ENCODE measurements at regions of chr12 and their contacts with region 1.

Region 1: DNA sequence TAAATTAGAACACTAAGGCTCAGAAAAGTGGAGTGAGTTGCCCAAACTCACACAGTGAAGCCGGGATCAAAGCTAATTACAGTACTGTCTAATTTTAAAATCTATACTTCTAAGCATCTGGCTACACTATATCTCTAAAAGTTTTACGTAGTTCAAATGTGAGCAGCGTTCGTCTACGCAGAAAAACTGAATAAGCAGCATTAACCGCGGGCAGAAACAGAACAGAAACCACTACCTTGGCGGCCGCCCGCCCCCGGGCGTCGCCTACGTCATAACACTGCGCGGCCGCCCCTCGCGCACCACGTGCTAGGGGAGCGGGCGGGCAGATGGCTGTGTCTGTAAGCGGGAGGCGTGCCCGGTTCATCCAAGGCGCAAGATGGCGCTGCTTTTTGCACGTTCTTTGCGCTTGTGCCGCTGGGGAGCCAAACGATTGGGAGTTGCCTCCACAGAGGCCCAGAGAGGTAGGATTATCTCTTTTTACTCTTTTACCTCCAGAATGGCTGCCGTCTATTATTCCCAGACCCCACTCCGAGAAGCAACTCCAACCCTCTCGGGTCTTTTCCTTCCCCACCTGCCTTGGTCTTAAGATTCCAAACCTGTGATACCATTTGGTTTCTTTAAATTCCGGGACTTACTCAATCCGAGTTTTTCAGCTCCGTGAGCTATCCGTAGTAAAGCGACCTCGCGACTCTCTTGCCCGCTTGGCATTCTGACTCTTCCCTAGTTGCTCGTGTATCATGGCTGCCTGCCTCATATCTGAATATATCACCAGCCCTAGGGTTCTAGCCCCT is at the start of gene SPRYD4:
- DNase-seq: peak; percentile 88
- H3K4me3 ChIP-seq: peak within 1 kb of the TSS; percentile 58 to 97 (median 89)
- H3K27ac ChIP-seq: peak within 1 kb of the TSS; percentile 88
- H3K4me1 ChIP-seq: peaks cover 8% of the 10 kb centered on the region
- H3K27me3 ChIP-seq: no peaks in the 10 kb centered on the region
- CTCF ChIP-seq: peak; percentile 6 to 31
- total RNA-seq, gene SPRYD4: 3.0 to 3.5 TPM

Region 2: GRCh38 chr12:55780685-55781084 is 687.7 kb before region 1 on chr12:
- CTCF ChIA-PET with region 1: no interaction called
- dilution Hi-C with region 1: no loop called
- in situ Hi-C with region 1: no loop called
- intact Hi-C with region 1: no loop called
- DNase-seq: peak; percentile 43
- H3K4me3 ChIP-seq: no peak overlapping the region
- H3K27ac ChIP-seq: no peak overlapping the region
- H3K4me1 ChIP-seq: no peaks in the 10 kb centered on the region
- H3K27me3 ChIP-seq: no peaks in the 10 kb centered on the region
- CTCF ChIP-seq: no peak

Region 3: DNA sequence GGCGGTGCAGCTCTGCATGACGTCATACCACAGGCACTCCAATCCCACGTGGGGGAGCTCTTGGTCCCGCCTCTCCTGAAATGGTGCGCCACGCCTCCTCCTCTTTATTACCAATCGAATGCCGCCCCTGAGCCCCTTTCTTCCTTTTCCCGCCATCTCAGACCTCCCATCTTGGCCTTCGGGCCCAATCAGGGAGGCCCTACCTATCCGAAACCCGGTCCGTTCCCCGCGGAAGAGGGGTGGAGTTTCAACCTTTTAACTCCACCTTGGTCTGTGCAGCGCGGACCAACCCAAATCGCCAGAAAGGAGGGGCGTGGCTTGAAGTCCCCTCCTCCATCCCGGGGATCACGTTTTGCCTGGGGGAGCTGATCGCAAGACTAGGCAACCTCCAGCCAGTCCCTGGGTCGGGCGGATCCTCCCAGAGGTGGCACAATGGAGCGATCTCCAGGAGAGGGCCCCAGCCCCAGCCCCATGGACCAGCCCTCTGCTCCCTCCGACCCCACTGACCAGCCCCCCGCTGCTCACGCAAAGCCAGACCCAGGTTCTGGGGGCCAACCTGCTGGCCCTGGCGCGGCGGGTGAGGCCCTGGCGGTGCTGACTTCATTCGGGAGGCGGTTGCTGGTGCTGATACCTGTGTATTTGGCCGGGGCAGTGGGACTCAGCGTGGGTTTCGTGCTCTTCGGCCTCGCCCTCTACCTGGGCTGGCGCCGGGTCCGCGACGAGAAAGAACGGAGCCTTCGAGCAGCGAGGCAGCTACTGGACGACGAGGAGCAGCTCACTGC is 340.3 kb before region 1 on chr12 and contains the start of gene ESYT1:
- CTCF ChIA-PET with region 1: no interaction called
- dilution Hi-C with region 1: no loop called
- in situ Hi-C with region 1: loop called in 1 of 2 experiments (anchors 10 kb)
- intact Hi-C with region 1: loop called (anchors 2 kb)
- DNase-seq: peak; percentile 100
- H3K4me3 ChIP-seq: peak within 1 kb of the TSS; percentile 74 to 86 (median 81)
- H3K27ac ChIP-seq: peak within 1 kb of the TSS; percentile 82
- H3K4me1 ChIP-seq: peaks cover 18% of the 10 kb centered on the region
- H3K27me3 ChIP-seq: no peaks in the 10 kb centered on the region
- CTCF ChIP-seq: no peak
- total RNA-seq, gene ESYT1: 166 to 366 TPM

Region 4: DNA sequence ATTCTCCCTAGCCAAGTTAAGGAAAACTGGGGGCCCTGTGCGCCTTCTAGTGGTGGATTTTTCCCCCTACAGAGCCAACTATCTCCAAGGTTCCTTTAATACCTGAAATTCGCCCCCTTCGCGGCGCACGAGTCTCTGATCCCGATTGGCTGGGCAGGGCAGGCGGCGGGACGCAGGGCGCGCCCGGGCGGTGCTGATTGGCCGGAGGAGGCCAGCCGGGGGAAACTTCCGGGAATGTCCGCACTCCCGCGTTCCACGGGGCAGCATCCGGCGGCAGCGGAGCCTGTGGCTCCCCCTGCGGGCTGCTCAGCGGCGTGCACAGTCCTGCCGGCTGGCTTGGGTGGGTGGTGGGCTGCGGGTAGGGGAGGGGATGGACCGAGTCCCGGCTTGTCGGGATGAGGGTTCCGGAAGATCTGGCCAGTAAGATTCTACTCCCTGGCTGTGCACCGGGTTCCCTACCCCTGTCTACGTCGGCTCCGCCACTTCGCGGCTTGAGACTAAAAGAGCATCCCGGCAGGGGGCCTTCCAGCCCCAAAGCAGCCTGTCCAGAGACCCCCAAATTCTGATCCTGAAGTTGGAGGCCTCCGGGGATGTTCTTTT is 244.2 kb before region 1 on chr12 and contains the start of gene NABP2:
- CTCF ChIA-PET with region 1: no interaction called
- dilution Hi-C with region 1: no loop called
- in situ Hi-C with region 1: loop called in 1 of 2 experiments (anchors 25 kb)
- intact Hi-C with region 1: no loop called
- DNase-seq: peak; percentile 98
- H3K4me3 ChIP-seq: peak within 1 kb of the TSS; percentile 69 to 72 (median 70)
- H3K27ac ChIP-seq: peak within 1 kb of the TSS; percentile 30
- H3K4me1 ChIP-seq: peaks cover 21% of the 10 kb centered on the region
- H3K27me3 ChIP-seq: no peaks in the 10 kb centered on the region
- CTCF ChIP-seq: peak; percentile 65 to 82
- total RNA-seq, gene NABP2: 18.3 to 37.5 TPM

Region 5: DNA sequence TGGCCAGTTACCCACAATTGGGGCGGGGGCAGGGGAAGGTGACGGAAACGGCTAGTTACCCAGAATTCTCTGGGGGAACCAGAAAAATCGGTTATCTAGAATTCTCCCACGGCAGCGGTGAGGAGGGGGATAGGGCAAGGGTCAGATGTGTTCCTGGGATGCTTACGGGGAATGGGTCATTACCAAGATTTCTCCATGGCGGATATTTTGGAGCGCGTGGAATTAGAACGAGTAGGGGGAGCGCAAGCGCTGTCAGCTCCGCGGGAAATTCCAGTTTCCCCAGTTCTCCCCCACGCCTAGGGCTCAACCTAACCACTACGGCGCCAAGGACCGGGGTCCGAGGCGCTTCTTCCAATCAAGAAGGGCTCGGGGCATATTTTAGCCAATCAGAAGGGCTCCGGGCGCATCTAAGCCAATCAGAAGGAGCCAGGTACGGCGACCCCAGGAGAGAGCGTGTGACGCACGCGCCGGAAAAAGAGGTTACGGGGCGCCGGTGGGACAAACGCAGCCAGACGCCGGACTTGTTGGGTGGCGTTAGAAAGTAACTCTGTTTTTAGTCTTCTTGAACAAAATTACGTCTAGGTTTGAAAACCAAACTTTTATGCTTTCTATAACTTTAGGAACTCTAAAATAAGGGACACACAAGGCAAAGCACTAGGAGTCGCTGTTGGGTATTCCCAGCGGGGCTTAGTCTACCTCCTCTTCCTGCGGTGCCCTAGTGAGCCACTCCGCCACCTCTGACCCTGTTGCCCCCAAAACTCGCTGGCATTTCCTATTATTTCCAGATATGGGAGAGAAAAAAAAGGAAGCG is 134.5 kb before region 1 on chr12 and contains the start of gene PAN2:
- CTCF ChIA-PET with region 1: no interaction called
- dilution Hi-C with region 1: no loop called
- in situ Hi-C with region 1: no loop called
- intact Hi-C with region 1: loop called (anchors 1 kb)
- DNase-seq: peak; percentile 98
- H3K4me3 ChIP-seq: peak within 1 kb of the TSS; percentile 52 to 72 (median 61)
- H3K27ac ChIP-seq: peak within 1 kb of the TSS; percentile 98
- H3K4me1 ChIP-seq: peaks cover 20% of the 10 kb centered on the region
- H3K27me3 ChIP-seq: no peaks in the 10 kb centered on the region
- CTCF ChIP-seq: peak; percentile 57 to 79
- total RNA-seq, gene PAN2: 21.0 to 50.8 TPM

Region 6: GRCh38 chr12:56377310-56377988 is 91.0 kb before region 1 on chr12:
- CTCF ChIA-PET with region 1: interaction called, 4 read pairs
- dilution Hi-C with region 1: no loop called
- in situ Hi-C with region 1: no loop called
- intact Hi-C with region 1: loop called (anchors 1 kb)
- DNase-seq: peak; percentile 59
- H3K4me3 ChIP-seq: no peak overlapping the region
- H3K27ac ChIP-seq: no peak overlapping the region
- H3K4me1 ChIP-seq: no peaks in the 10 kb centered on the region
- H3K27me3 ChIP-seq: no peaks in the 10 kb centered on the region
- CTCF ChIP-seq: peak; percentile 33 to 59

Region 7: DNA sequence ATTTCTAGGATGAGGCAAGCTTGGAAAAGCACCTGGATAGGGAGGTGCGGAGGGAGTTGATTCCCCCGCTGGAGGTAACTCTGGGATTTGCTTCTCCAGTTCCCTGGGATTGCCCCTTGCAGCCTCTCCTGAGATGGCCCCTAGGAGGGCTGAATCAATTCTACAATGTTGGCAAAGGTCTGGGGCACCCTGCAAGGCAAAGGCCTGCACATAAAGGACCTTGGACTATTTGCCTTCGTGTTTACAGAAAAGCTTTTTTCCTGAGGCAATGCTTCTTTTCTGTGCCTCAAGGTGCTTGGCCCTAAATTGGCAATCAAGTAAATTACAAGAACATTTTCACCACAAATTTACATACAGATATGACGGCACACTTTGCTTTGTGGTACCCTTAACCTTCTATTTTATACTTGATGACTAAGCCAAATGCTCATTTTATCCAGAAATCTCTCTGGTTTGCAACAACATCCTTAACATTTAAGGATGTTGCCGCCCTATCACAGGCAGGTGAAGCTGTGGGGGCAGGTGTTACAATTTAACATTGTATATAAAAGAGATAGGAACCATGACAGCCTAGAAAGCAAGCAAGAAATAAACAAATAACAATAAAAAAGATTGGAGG is 59.5 kb before region 1 on chr12:
- CTCF ChIA-PET with region 1: no interaction called
- dilution Hi-C with region 1: no loop called
- in situ Hi-C with region 1: no loop called
- intact Hi-C with region 1: no loop called
- DNase-seq: no peak
- H3K4me3 ChIP-seq: no peak overlapping the region
- H3K27ac ChIP-seq: no peak overlapping the region
- H3K4me1 ChIP-seq: no peaks in the 10 kb centered on the region
- H3K27me3 ChIP-seq: no peaks in the 10 kb centered on the region
- CTCF ChIP-seq: no peak